ENCODE measurements at regions of chr6 and their contacts with region 1.

Region 1: DNA sequence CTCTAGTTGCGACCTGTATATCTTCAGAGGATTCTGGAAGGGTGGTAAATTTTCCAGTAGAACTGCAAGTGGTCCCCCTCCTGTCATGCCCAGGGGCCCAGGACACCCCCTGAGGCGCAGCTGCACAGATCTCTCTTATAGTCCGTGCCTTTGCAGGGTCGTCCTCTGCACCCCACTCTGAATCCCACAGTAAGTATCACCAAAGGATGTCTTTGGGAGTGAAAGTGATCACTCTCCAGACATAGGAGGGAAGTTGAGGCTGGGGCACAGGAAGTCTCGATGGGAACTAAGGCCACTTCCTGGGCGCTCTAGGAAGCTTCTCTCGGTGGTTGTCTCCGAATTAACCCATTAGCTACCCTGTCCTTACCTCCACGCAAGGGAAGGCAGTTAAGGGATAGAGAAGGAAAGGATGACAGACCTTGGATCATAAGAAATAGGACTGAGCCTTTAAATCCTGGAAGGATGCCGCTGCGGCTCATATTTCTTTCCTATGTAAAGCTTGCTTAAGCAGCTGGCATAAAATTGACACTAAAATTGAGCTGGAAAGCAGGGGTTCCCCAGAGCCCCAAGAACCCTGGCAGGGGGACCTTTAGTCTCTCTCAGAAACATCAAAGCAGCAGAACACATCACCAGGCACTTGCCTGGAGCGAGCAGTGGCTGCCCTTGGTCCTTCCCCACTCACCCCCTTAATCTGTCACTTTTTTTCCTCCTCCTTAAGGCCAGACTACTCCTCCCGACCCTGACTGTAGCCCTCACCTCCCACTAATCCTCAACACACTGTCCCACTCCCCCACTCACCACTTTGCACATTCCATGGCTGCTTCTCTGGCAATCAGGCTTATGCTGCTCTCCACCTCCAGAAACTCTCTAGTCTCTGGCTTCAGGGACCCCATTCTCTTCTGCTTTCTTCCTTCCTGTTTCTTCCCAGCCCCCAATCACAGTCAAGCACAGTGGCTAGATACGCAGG is at the start of gene ZKSCAN4:
- DNase-seq: peak; percentile 92
- H3K4me3 ChIP-seq: peak within 1 kb of the TSS; percentile 99
- H3K27ac ChIP-seq: peak within 1 kb of the TSS; percentile 47
- H3K4me1 ChIP-seq: peaks cover 21% of the 10 kb centered on the region
- CTCF ChIP-seq: no peak
- total RNA-seq, gene ZKSCAN4: 7.9 and 9.3 TPM in 2 replicates

Region 2: DNA sequence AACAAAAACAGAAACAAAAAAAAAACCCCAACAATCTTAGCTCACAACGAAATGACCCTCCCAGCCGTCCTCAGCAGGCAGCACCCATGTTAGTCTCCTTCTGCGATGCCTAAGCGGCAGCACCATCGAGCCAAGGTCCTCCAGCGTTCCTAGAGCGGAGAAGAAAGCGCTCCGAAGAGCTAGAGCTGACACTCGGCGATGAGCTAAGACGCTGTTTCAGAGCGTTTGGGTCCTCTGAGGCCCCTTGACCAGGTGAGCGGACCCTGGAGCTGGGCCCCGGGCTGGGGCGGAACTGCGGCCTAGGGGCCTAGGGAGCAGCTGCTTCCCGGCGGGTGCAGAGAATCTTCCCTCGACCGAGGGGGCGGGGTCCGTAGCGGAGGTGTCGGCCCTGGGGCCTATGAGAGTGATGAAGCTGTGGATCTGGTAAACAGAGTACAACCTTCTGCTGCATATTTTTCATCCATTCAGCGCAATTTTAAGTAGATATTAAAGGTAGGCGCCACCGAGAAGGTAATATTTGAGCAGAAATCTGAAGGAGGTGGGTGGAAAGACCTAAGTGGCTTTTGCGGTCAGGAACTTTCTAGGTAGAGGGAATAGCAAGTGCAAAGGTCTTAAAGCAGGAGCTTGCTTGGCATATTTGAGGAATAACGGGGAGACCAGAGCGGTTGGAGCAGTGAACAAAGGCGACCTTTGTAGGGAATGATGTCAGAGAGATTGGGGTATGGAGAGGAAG is 14.8 kb after region 1 on chr6 and contains the start of gene ZSCAN26:
- CTCF ChIA-PET with region 1: interaction called, 3 read pairs
- POLR2A ChIA-PET with region 1: interaction called, 24 read pairs
- intact Hi-C with region 1: loop called (anchors 2 kb)
- DNase-seq: peak; percentile 87
- H3K4me3 ChIP-seq: peak within 1 kb of the TSS; percentile 76
- H3K27ac ChIP-seq: peak within 1 kb of the TSS; percentile 17
- H3K4me1 ChIP-seq: peaks cover 16% of the 10 kb centered on the region
- CTCF ChIP-seq: no peak
- total RNA-seq, gene ZSCAN26: 6.8 and 15.4 TPM in 2 replicates

Region 3: GRCh38 chr6:28281288-28282064 is 29.2 kb after region 1 on chr6 and contains the start of gene PGBD1:
- CTCF ChIA-PET with region 1: no interaction called
- POLR2A ChIA-PET with region 1: interaction called, 5 read pairs
- intact Hi-C with region 1: loop called (anchors 1 kb)
- DNase-seq: peak; percentile 71
- H3K4me3 ChIP-seq: peak within 1 kb of the TSS; percentile 69
- H3K27ac ChIP-seq: no peak within 1 kb of the TSS
- H3K4me1 ChIP-seq: peaks cover 7% of the 10 kb centered on the region
- CTCF ChIP-seq: no peak
- total RNA-seq, gene PGBD1: 1.6 and 3.3 TPM in 2 replicates

Region 4: DNA sequence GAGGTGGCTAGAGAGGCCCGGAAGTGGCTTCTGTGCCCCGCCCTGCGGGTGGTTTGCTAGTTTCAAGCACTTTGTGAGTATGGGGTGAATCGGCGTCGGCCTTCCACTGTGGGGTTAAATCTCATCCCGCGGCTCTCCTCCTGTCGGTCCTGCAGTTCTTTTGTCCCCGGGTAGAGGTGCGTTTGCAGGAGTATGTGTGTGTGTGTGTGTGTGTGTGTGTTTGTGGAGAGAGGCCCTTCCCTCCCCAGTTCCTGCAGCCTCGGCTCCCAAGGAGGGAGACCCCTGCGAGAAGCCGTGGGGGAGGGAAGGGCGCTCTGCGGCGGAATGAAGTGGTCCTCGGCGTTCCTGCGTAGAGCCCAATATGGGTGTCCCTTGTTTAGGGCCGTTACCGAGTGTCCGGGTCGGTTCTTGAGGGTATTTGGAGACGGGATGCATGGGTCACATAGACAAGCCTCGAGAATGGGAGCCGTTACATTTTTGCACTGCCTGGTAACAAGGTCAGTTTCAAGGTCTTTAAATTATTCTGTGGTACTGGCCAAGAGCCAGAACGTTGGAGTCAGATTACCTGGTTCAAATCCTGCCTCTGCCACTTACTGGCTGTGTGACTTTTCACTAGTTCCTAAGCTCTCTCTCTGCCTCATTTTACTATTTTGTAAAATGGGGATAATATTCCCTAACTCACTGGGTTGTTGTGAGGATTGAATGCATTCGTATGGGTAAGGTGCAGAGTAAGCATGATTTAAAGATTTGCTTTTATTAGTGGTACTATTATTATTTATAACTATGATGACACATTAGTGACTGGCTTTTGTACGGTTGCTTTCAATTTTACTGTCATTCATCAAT is 97.8 kb after region 1 on chr6 and contains the start of gene ZKSCAN3:
- CTCF ChIA-PET with region 1: no interaction called
- POLR2A ChIA-PET with region 1: interaction called, 3 read pairs
- intact Hi-C with region 1: loop called (anchors 5 kb)
- DNase-seq: peak; percentile 85
- H3K4me3 ChIP-seq: peak within 1 kb of the TSS; percentile 79
- H3K27ac ChIP-seq: peak within 1 kb of the TSS; percentile 31
- H3K4me1 ChIP-seq: peaks cover 8% of the 10 kb centered on the region
- CTCF ChIP-seq: no peak
- total RNA-seq, gene ZKSCAN3: 2.5 and 3.2 TPM in 2 replicates